Ovary (tissue), 10 donors: ENCODE measurements at regions of chr6 and their contacts with region 1.

Region 1: GRCh38 chr6:28136585-28137504 is 4.8 kb upstream of the ZKSCAN8 start:
- DNase-seq: peak; percentile 93 to 96 (median 95)
- H3K4me3 ChIP-seq: peak overlapping the region; percentile 74
- H3K27ac ChIP-seq: peak overlapping the region; percentile 94 to 95
- H3K4me1 ChIP-seq: peaks cover 7% of the 10 kb centered on the region
- H3K27me3 ChIP-seq: no peaks in the 10 kb centered on the region
- CTCF ChIP-seq: no peak
- EP300 ChIP-seq: no peak
- POLR2A ChIP-seq: peak; percentile 29

Region 2: DNA sequence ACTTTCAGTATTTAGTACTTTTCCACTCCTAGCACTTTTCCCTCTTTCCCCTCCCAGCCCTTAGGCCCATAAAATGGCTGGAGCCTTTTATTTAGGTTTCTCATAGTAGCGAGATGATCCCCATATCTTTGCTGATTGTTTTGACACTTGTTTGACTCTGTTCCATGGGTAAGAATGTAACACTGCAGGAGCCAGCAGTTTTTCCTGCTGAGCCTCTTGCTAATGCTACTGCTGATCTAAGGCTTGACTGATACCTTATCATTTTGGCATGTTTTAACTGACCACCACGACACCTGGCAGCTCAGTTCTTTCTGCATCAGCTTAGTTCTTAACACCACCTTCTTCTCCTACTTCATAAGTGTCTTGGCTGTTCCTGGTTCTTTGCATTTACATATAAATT is 34.4 kb after region 1 on chr6:
- intact Hi-C with region 1: no loop called
- DNase-seq: no peak
- H3K4me3 ChIP-seq: no peak overlapping the region
- H3K27ac ChIP-seq: no peak overlapping the region
- H3K4me1 ChIP-seq: no peaks in the 10 kb centered on the region
- H3K27me3 ChIP-seq: no peaks in the 10 kb centered on the region
- CTCF ChIP-seq: no peak
- EP300 ChIP-seq: no peak
- POLR2A ChIP-seq: no peak

Region 3: GRCh38 chr6:28225056-28225834 is 88.4 kb after region 1 on chr6 and contains the start of gene ZSCAN9:
- intact Hi-C with region 1: loop called in 1 of 4 experiments (anchors 5 kb)
- DNase-seq: peak; percentile 83 to 92 (median 85)
- H3K4me3 ChIP-seq: peak within 1 kb of the TSS; percentile 89
- H3K27ac ChIP-seq: peak within 1 kb of the TSS in 1 of 2 donors; percentile 33
- H3K4me1 ChIP-seq: peaks cover 1% of the 10 kb centered on the region
- H3K27me3 ChIP-seq: no peaks in the 10 kb centered on the region
- CTCF ChIP-seq: no peak
- EP300 ChIP-seq: no peak
- POLR2A ChIP-seq: peak; percentile 20
- total RNA-seq, gene ZSCAN9: 10.0 to 17.5 (median 13.7) TPM

Region 4: GRCh38 chr6:28335564-28336283 is 198.9 kb after region 1 on chr6 and contains the start of gene ZSCAN31:
- intact Hi-C with region 1: loop called in 1 of 4 experiments (anchors 5 kb)
- DNase-seq: peak; percentile 94 to 98 (median 96)
- H3K4me3 ChIP-seq: peak within 1 kb of the TSS; percentile 68
- H3K27ac ChIP-seq: peak within 1 kb of the TSS; percentile 91 to 96
- H3K4me1 ChIP-seq: peaks cover 6% of the 10 kb centered on the region
- H3K27me3 ChIP-seq: no peaks in the 10 kb centered on the region
- CTCF ChIP-seq: no peak
- EP300 ChIP-seq: peak; percentile 5
- POLR2A ChIP-seq: peak; percentile 79
- total RNA-seq, gene ZSCAN31: 14.1 to 40.1 (median 21.9) TPM

Region 5: GRCh38 chr6:28515676-28516075 is 378.8 kb after region 1 on chr6 and contains the start of gene GPX6:
- intact Hi-C with region 1: no loop called
- DNase-seq: no peak
- H3K4me3 ChIP-seq: no peak within 1 kb of the TSS
- H3K27ac ChIP-seq: no peak within 1 kb of the TSS
- H3K4me1 ChIP-seq: no peaks in the 10 kb centered on the region
- H3K27me3 ChIP-seq: no peaks in the 10 kb centered on the region
- CTCF ChIP-seq: no peak
- EP300 ChIP-seq: no peak
- POLR2A ChIP-seq: no peak
- total RNA-seq, gene GPX6: not detected